ENCODE measurements at regions of chr13 and their contacts with region 1.

Region 1: DNA sequence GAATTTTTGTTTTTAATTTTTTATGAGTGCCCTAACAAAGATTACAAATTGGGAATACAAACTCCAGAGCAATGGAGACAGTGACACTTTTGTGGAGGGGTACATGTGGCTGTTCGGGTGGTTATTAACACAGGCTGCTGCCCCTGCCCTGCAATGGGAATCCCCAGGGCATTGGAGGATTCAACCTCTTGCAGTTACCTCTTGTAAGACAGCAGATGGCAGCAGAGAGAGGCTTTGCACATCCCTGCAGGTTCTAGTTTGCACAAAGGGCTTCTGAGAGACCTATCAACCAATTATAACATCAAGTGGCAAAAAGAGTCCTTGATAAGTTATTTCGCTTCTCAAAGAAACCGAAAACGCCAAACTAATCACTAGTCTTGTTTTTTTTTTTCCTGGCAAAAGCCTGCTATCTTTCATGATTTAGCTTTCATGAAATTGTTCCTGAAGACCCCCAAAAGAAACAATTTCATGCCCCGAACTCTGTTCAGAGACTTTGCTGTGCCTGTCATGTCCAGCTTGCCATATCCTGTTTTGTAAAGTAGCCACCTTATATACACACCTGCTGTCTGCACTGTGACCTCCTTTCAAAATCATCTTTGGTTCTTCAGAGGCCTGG is 10.4 kb downstream of the GJB2 start:
- DNase-seq: peak; percentile 35
- ATAC-seq: peak; percentile 97
- H3K4me3 ChIP-seq: no peak overlapping the region
- H3K27ac ChIP-seq: no peak overlapping the region
- H3K4me1 ChIP-seq: no peaks in the 10 kb centered on the region
- H3K27me3 ChIP-seq: no peaks in the 10 kb centered on the region
- CTCF ChIP-seq: peak; percentile 76 to 85 (median 85)
- EP300 ChIP-seq: no peak
- POLR2A ChIP-seq: no peak
- RAD21 ChIP-seq: peak; percentile 79

Region 2: DNA sequence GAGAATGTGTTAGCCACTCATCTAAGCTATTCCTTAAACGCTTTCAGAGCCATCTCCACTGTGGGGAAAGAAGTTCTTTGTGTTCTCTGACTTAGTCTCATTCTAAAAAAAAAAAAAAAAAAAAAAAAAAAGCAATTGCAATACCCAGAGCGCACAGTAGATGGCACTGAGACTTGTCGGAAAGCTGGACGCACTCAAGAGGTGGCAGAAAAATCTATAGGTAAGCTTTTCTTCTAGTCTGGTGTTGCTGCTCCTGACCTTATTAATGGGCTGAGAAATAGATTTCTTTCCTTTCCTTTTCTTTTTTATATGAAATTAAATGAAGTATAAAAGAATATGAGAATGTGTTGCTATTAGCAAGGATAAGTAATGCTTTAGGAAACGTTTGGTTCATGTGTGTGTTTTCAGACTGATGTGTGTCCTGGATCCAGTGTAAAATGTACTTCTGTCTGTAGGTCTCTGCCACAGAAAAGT is 15.1 kb after region 1 on chr13:
- CTCF ChIA-PET with region 1: interaction called, 67 read pairs
- POLR2A ChIA-PET with region 1: no interaction called
- RAD21 ChIA-PET with region 1: interaction called, 4 read pairs
- SMC1A ChIA-PET with region 1: interaction called, 6 read pairs
- in situ Hi-C with region 1: no loop called
- intact Hi-C with region 1: no loop called
- DNase-seq: no peak
- ATAC-seq: peak; percentile 64
- H3K4me3 ChIP-seq: no peak overlapping the region
- H3K27ac ChIP-seq: no peak overlapping the region
- H3K4me1 ChIP-seq: peaks cover 6% of the 10 kb centered on the region; the same call in 1 of the 2 replicates
- H3K27me3 ChIP-seq: peaks cover 4 to 21% of the 10 kb centered on the region in 2 experiments; a peak in 3 of 4 replicates
- CTCF ChIP-seq: peak; percentile 71 to 79 (median 73)
- EP300 ChIP-seq: no peak
- POLR2A ChIP-seq: no peak
- RAD21 ChIP-seq: peak; percentile 85